Stomach (tissue), 19 donors: ENCODE measurements at regions of chr11 and their contacts with region 1.

Region 1: GRCh38 chr11:13962562-13963168 is at the start of gene SPON1:
- DNase-seq: peak; percentile 30 to 91
- H3K4me3 ChIP-seq: peak within 1 kb of the TSS; percentile 55 to 61 (median 58)
- H3K27ac ChIP-seq: peak within 1 kb of the TSS; percentile 69 to 85 (median 82)
- H3K4me1 ChIP-seq: peaks cover 27 to 56% (median 44%) of the 10 kb centered on the region in 4 donors
- H3K27me3 ChIP-seq: peaks cover 0 to 74% (median 35%) of the 10 kb centered on the region in 3 donors
- CTCF ChIP-seq: no peak
- EP300 ChIP-seq: no peak
- POLR2A ChIP-seq: no peak
- total RNA-seq, gene SPON1: 17.5 to 122 (median 73.6) TPM

Region 2: DNA sequence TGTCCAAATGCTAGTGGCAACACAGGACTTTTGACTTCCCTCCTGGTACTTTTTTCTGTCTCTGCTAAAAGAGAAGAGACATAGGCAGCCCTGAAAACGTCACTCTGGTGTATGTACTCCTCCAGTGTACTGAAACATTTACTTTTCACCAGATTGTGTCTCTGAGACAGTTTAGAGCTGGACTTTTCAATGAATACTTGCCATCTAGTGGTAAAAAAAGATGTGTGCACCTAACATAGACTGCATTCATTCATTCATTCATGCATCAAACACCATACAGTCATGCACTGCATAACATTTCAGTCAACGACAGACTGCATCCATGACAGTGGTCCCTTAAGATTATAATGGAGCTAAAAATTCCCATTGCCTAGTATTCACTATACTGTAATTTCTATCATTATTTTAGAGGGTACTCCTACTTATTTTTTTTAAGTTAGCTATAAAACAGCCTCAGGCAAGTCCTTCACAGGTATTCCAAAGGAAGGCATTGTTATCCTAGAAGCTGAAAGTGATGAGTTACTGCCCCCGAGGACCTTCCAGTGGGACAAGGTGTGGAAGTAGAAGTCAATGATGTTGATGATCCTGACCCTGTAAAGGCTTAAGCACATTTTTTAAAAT is 186.1 kb after region 1 on chr11:
- intact Hi-C with region 1: loop called (anchors 10 kb)
- DNase-seq: peak in 1 of 2 donors; percentile 66
- H3K4me3 ChIP-seq: no peak overlapping the region
- H3K27ac ChIP-seq: no peak overlapping the region
- H3K4me1 ChIP-seq: peaks cover 0 to 5% (median 2%) of the 10 kb centered on the region in 4 donors
- H3K27me3 ChIP-seq: no peaks in the 10 kb centered on the region
- CTCF ChIP-seq: peak in 5 of 7 experiments; percentile 47 to 62 (median 53)
- EP300 ChIP-seq: no peak
- POLR2A ChIP-seq: no peak

Region 3: DNA sequence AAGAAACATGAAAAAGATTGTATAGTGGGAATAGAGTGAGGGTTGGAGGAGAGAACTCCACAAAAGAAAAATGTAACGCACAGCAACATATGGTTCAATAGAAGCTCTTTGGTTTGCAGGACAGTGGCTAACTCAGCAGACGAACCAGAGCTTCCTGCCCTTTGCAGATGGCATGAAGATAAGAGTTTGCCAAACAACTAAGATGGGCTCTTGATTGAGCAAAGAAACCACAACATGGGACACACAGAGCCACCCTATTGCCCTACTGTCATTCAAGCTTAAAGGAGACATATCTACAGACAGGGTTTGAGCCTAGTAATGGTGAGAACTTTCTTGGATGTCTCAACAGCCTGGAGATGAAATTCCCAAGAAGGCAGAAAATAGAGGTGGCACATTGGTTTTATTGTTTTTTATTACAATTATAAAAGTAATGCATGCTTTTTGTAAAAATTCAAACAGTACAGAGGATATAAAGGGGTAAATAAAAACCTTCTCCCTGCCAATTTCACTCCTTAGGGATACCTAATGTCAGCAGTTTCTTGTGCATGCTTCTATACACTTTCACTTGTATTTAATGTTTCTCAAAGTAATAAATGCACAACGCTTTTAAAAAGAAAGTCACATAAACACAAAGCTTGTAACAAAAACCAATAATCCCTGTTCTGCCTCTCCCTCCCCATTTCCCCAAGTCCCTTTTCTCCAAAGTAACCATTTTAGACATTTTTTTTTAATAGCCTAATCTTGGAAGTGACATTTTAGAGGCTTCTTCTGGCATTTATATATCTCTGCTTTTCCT is 473.2 kb after region 1 on chr11:
- intact Hi-C with region 1: no loop called
- DNase-seq: no peak
- H3K4me3 ChIP-seq: no peak overlapping the region
- H3K27ac ChIP-seq: no peak overlapping the region
- H3K4me1 ChIP-seq: no peaks in the 10 kb centered on the region
- H3K27me3 ChIP-seq: no peaks in the 10 kb centered on the region
- CTCF ChIP-seq: no peak
- EP300 ChIP-seq: no peak
- POLR2A ChIP-seq: no peak